ENCODE measurements at regions of chr5 and their contacts with region 1.

Region 1: GRCh38 chr5:173615884-173616576 is 420 bp downstream of the BOD1 start:
- DNase-seq: peak; percentile 83
- H3K4me3 Mint-ChIP-seq: peak overlapping the region; percentile 95
- H3K27ac Mint-ChIP-seq: peak overlapping the region; percentile 93
- H3K4me1 Mint-ChIP-seq: peaks cover 48% of the 10 kb centered on the region
- H3K27me3 Mint-ChIP-seq: no peaks in the 10 kb centered on the region

Region 2: DNA sequence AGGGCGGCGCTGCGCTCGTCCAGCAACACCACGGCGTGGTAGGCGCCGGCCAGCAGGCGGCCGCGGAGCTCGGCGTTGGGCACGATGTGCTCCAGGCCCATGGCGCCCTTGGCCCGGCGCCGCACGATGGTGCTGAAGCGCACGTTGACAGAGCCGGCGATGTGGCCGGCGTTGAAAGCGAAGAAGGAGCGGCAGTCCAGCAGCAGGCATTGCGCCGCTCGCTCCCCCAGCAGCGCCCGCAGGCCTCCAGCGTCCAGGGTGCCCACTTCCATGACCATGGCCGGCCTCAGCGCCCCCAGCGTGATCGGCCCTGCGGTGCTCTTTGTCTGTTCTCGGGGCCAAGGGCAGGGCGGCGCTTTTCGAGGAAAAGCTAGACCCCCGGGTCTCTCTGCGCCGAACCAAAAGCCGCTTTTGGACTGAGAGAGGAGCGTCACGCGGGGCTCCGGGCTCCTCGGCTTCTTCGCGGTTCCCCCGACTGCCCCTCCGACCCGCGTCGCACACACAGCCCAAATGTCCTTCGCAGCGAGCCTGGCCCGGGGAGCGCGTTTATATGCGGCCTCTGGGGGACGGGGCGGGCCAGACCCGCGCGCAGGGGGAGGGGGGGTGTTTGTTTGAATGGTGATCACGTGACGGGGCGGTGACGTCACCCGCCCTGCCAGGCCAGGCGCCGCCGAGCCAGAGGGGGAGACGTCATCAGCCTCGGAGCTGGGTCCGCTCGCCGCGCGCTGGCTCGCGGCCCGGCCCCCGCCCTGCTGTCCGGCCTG is 845.2 kb before region 1 on chr5 and contains the start of gene DUSP1:
- CTCF ChIA-PET with region 1: no interaction called
- intact Hi-C with region 1: loop called (anchors 5 kb)
- DNase-seq: peak; percentile 96
- H3K4me3 Mint-ChIP-seq: peak within 1 kb of the TSS; percentile 90
- H3K27ac Mint-ChIP-seq: peak within 1 kb of the TSS; percentile 93
- H3K4me1 Mint-ChIP-seq: peaks cover 66% of the 10 kb centered on the region
- H3K27me3 Mint-ChIP-seq: no peaks in the 10 kb centered on the region
- total RNA-seq, gene DUSP1: 7.0 to 7.3 TPM

Region 3: GRCh38 chr5:173057062-173057924 is 558.7 kb before region 1 on chr5:
- CTCF ChIA-PET with region 1: no interaction called
- intact Hi-C with region 1: loop called (anchors 2 kb)
- DNase-seq: peak; percentile 100
- H3K4me3 Mint-ChIP-seq: peak overlapping the region; percentile 91
- H3K27ac Mint-ChIP-seq: peak overlapping the region; percentile 97
- H3K4me1 Mint-ChIP-seq: peaks cover 51% of the 10 kb centered on the region
- H3K27me3 Mint-ChIP-seq: no peaks in the 10 kb centered on the region

Region 4: DNA sequence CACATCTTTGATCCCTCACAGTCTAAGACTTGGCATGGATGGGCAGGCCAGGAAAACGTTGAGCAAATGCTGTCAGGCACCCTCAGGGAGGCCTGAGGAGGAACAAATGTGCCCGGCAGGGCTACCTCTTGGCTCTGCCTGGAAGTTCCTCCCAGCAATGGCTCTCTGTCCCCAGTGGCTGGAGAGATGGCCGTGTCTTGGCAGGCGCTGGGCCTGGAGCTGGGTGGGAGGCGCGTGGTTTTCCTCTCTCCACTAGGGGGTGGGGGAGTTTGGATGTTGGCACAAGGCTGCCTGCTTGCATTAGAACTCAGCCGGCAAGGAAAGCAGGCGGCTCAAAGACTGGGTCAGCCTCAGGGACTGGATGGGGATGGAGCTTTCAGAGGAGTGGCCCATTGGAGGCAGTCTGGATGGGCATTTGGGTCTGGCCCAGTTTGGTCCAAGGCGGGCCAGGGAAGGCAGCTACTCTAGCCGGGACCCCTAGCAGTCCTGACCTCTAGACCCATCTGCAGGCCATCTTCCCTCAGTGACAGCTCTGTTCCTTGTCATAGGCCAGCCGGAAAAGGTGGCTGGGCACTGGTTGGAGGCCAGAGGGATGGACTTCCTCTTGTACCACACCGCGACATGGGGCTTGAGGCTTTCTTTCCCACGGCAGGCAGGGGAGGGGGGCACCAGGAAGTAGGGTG is 219.6 kb before region 1 on chr5:
- CTCF ChIA-PET with region 1: no interaction called
- intact Hi-C with region 1: no loop called
- DNase-seq: no peak
- H3K4me3 Mint-ChIP-seq: no peak overlapping the region
- H3K27ac Mint-ChIP-seq: no peak overlapping the region
- H3K4me1 Mint-ChIP-seq: no peaks in the 10 kb centered on the region
- H3K27me3 Mint-ChIP-seq: peaks cover 11% of the 10 kb centered on the region

Region 5: GRCh38 chr5:173781814-173782670 is 166.0 kb after region 1 on chr5:
- CTCF ChIA-PET with region 1: interaction called, 3 read pairs
- intact Hi-C with region 1: loop called (anchors 5 kb)
- DNase-seq: peak; percentile 84
- H3K4me3 Mint-ChIP-seq: no peak overlapping the region
- H3K27ac Mint-ChIP-seq: peak overlapping the region; percentile 86
- H3K4me1 Mint-ChIP-seq: peaks cover 31% of the 10 kb centered on the region
- H3K27me3 Mint-ChIP-seq: no peaks in the 10 kb centered on the region

Region 6: DNA sequence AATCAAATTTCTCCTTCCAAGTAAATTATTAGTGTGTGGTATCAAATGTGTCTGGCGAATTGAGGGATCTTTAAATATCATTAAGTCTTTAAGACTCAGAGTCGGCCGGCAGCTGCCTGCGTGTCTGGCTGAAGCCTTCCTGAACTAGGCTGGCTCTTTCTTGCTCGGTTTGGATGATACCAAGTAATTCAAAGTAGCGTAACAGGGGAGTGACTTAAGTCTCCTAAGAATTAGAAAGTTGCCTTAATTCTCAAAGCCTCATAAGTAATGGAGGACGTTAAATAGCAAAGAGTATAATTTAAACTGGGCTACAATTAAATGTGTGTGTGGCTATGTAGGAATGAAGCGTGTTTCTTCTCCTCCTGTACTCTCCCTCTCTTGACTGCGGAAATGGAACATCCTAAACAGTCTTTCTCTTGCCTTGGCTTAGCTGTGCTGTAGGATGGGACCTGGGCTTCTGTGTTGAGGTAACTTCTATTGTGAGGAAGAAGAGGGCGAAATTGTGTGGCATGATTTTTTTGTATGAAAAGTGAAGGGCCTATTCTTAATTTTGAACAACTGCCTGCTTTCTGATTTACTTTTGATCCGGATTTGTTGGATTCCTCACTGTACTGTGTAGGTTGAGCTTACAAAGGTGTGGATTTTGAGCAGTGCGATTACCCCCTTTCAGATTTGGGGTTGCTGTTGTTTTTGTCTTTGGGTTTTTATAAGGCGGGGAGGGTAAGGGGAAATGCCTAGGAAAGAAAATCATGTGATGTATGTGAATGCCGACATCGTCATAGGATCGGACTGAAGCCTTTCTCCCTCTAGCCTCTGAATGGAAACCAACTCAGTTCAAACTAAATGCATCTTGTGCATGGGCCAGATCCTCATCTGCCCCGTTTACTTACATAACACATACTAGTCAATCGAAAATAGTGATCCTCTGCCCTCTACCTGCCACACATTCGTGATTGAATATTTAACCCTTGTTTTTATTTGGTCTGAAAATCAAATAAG is 302.1 kb after region 1 on chr5:
- CTCF ChIA-PET with region 1: no interaction called
- intact Hi-C with region 1: loop called (anchors 1 kb)
- DNase-seq: peak; percentile 72
- H3K4me3 Mint-ChIP-seq: no peak overlapping the region
- H3K27ac Mint-ChIP-seq: no peak overlapping the region
- H3K4me1 Mint-ChIP-seq: peaks cover 18% of the 10 kb centered on the region
- H3K27me3 Mint-ChIP-seq: no peaks in the 10 kb centered on the region

Region 7: GRCh38 chr5:173972925-173973615 is 357.0 kb after region 1 on chr5:
- CTCF ChIA-PET with region 1: interaction called, 57 read pairs
- intact Hi-C with region 1: loop called (anchors 1 kb)
- DNase-seq: peak; percentile 90
- H3K4me3 Mint-ChIP-seq: peak overlapping the region; percentile 71
- H3K27ac Mint-ChIP-seq: peak overlapping the region; percentile 47
- H3K4me1 Mint-ChIP-seq: peaks cover 8% of the 10 kb centered on the region
- H3K27me3 Mint-ChIP-seq: peaks cover 8% of the 10 kb centered on the region

Region 8: GRCh38 chr5:174311531-174312269 is 695.7 kb after region 1 on chr5:
- CTCF ChIA-PET with region 1: interaction called, 8 read pairs
- intact Hi-C with region 1: loop called (anchors 1 kb)
- DNase-seq: peak; percentile 71
- H3K4me3 Mint-ChIP-seq: no peak overlapping the region
- H3K27ac Mint-ChIP-seq: no peak overlapping the region
- H3K4me1 Mint-ChIP-seq: peaks cover 6% of the 10 kb centered on the region
- H3K27me3 Mint-ChIP-seq: peaks cover 39% of the 10 kb centered on the region

Measured in activated naive CD4-positive, alpha-beta T cell treated with anti-CD3 and anti-CD28 coated beads for 36 hours (primary cell).